ENCODE measurements at regions of chr11 and their contacts with region 1.

Region 1: DNA sequence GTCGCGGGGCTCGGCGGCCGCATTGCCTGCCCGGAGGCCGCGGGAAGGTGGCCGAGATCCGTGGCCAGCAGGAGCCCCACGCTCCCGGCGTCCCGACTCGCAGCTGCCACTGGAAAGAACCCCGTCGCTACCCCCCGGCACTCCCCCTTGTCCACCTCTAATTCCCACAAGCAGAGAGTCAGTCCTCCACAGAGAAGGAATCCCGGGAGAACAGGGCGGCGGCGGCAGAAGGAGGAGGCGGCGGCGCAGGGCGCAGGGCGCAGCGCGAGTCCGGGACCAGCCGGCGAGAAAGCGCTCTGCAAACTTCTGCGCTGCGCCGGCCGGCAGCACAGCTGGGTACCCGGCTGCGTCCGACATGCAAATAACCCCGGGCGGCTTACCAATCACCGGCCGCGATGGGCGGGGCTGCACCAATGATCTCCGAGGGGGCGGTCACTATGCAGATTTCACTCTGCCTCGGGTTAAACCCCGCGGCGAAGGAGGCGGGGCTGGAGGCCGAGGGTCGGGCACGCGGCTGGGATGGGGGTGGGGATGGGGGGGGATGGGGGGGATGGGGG is at the start of gene ABTB2:
- DNase-seq: peak; percentile 92 to 98 (median 96)
- ATAC-seq: peak; percentile 89
- H3K4me3 ChIP-seq: peak within 1 kb of the TSS; percentile 75
- H3K4me3 Mint-ChIP-seq: peak within 1 kb of the TSS; percentile 91
- H3K27ac ChIP-seq: peak within 1 kb of the TSS; percentile 28 to 36
- H3K27ac Mint-ChIP-seq: peak within 1 kb of the TSS; percentile 42
- H3K4me1 ChIP-seq: peaks cover 31% of the 10 kb centered on the region
- H3K4me1 Mint-ChIP-seq: peaks cover 14% of the 10 kb centered on the region
- H3K27me3 ChIP-seq: peaks cover 18 to 38% of the 10 kb centered on the region in 2 experiments
- H3K27me3 Mint-ChIP-seq: peaks cover 53% of the 10 kb centered on the region
- CTCF ChIP-seq: no peak
- total RNA-seq, gene ABTB2: 0.88 to 1.0 TPM

Region 2: GRCh38 chr11:32583459-32584271 is 1774.1 kb before region 1 on chr11 and contains the start of gene EIF3M:
- CTCF ChIA-PET with region 1: no interaction called
- POLR2A ChIA-PET with region 1: no interaction called
- intact Hi-C with region 1: loop called in 1 of 2 experiments (anchors 5 kb)
- DNase-seq: peak; percentile 92 to 98 (median 95)
- ATAC-seq: peak; percentile 98
- H3K4me3 ChIP-seq: peak within 1 kb of the TSS; percentile 89
- H3K4me3 Mint-ChIP-seq: peak within 1 kb of the TSS; percentile 94
- H3K27ac ChIP-seq: peak within 1 kb of the TSS; percentile 84 to 87
- H3K27ac Mint-ChIP-seq: peak within 1 kb of the TSS; percentile 94
- H3K4me1 ChIP-seq: peaks cover 38% of the 10 kb centered on the region
- H3K4me1 Mint-ChIP-seq: peaks cover 52% of the 10 kb centered on the region
- H3K27me3 ChIP-seq: no peaks in the 10 kb centered on the region
- H3K27me3 Mint-ChIP-seq: no peaks in the 10 kb centered on the region
- CTCF ChIP-seq: no peak
- total RNA-seq, gene EIF3M: 260 to 264 TPM

Region 3: GRCh38 chr11:33692013-33692504 is 665.7 kb before region 1 on chr11:
- CTCF ChIA-PET with region 1: no interaction called
- POLR2A ChIA-PET with region 1: interaction called, 3 read pairs
- intact Hi-C with region 1: loop called in 1 of 2 experiments (anchors 10 kb)
- DNase-seq: no peak
- ATAC-seq: no peak
- H3K4me3 ChIP-seq: no peak overlapping the region
- H3K4me3 Mint-ChIP-seq: no peak overlapping the region
- H3K27ac ChIP-seq: no peak overlapping the region
- H3K27ac Mint-ChIP-seq: no peak overlapping the region
- H3K4me1 ChIP-seq: no peaks in the 10 kb centered on the region
- H3K4me1 Mint-ChIP-seq: peaks cover 10% of the 10 kb centered on the region
- H3K27me3 ChIP-seq: peaks cover 2 to 3% of the 10 kb centered on the region in 2 experiments
- H3K27me3 Mint-ChIP-seq: peaks cover 10% of the 10 kb centered on the region
- CTCF ChIP-seq: no peak

Region 4: DNA sequence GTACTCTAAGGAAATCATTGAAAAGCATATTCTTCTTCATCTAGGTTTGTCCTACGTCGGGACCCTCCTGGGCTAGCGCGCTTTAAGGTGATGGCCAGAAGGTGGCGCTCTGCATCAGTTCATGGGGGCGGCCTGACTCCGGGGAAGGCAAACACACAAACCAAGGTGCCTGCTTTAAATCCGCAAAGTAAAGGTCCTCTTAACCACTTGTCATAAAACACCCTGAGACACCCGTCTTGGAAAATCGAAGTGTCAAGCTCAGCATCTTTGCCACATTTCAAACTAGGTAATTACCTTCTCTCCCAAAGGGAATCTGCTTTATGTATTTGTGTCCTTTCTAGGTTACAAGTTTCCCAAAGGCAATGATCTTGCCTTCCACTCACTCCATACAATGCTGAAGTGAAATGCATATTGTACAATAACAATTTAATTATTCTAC is 499.8 kb before region 1 on chr11:
- CTCF ChIA-PET with region 1: no interaction called
- POLR2A ChIA-PET with region 1: no interaction called
- intact Hi-C with region 1: loop called (anchors 1 kb)
- DNase-seq: peak; percentile 54 to 84 (median 64)
- ATAC-seq: peak; percentile 89
- H3K4me3 ChIP-seq: no peak overlapping the region
- H3K4me3 Mint-ChIP-seq: no peak overlapping the region
- H3K27ac ChIP-seq: no peak overlapping the region
- H3K27ac Mint-ChIP-seq: no peak overlapping the region
- H3K4me1 ChIP-seq: no peaks in the 10 kb centered on the region
- H3K4me1 Mint-ChIP-seq: no peaks in the 10 kb centered on the region
- H3K27me3 ChIP-seq: peaks cover 21 to 30% of the 10 kb centered on the region in 2 experiments
- H3K27me3 Mint-ChIP-seq: peaks cover 56% of the 10 kb centered on the region
- CTCF ChIP-seq: peak; percentile 74

Region 5: GRCh38 chr11:34051349-34052035 is 306.3 kb before region 1 on chr11 and contains the start of gene CAPRIN1:
- CTCF ChIA-PET with region 1: interaction called, 3 read pairs
- POLR2A ChIA-PET with region 1: interaction called, 10 read pairs
- intact Hi-C with region 1: loop called (anchors 2 kb)
- DNase-seq: peak; percentile 70 to 93 (median 80)
- ATAC-seq: peak; percentile 69
- H3K4me3 ChIP-seq: peak within 1 kb of the TSS; percentile 99
- H3K4me3 Mint-ChIP-seq: peak within 1 kb of the TSS; percentile 95
- H3K27ac ChIP-seq: peak within 1 kb of the TSS; percentile 98 to 99
- H3K27ac Mint-ChIP-seq: peak within 1 kb of the TSS; percentile 100
- H3K4me1 ChIP-seq: peaks cover 25% of the 10 kb centered on the region
- H3K4me1 Mint-ChIP-seq: peaks cover 26% of the 10 kb centered on the region
- H3K27me3 ChIP-seq: no peaks in the 10 kb centered on the region
- H3K27me3 Mint-ChIP-seq: no peaks in the 10 kb centered on the region
- CTCF ChIP-seq: no peak
- total RNA-seq, gene CAPRIN1: 107 TPM

Region 6: GRCh38 chr11:34174412-34175041 is 183.3 kb before region 1 on chr11:
- CTCF ChIA-PET with region 1: interaction called, 47 read pairs
- POLR2A ChIA-PET with region 1: interaction called, 23 read pairs
- intact Hi-C with region 1: loop called (anchors 1 kb)
- DNase-seq: peak; percentile 65 to 88 (median 74)
- ATAC-seq: peak; percentile 99
- H3K4me3 ChIP-seq: peak overlapping the region; percentile 28
- H3K4me3 Mint-ChIP-seq: no peak overlapping the region
- H3K27ac ChIP-seq: no peak overlapping the region
- H3K27ac Mint-ChIP-seq: no peak overlapping the region
- H3K4me1 ChIP-seq: peaks cover 12% of the 10 kb centered on the region
- H3K4me1 Mint-ChIP-seq: no peaks in the 10 kb centered on the region
- H3K27me3 ChIP-seq: peaks cover 0 to 2% of the 10 kb centered on the region in 2 experiments
- H3K27me3 Mint-ChIP-seq: no peaks in the 10 kb centered on the region
- CTCF ChIP-seq: peak; percentile 79

Region 7: DNA sequence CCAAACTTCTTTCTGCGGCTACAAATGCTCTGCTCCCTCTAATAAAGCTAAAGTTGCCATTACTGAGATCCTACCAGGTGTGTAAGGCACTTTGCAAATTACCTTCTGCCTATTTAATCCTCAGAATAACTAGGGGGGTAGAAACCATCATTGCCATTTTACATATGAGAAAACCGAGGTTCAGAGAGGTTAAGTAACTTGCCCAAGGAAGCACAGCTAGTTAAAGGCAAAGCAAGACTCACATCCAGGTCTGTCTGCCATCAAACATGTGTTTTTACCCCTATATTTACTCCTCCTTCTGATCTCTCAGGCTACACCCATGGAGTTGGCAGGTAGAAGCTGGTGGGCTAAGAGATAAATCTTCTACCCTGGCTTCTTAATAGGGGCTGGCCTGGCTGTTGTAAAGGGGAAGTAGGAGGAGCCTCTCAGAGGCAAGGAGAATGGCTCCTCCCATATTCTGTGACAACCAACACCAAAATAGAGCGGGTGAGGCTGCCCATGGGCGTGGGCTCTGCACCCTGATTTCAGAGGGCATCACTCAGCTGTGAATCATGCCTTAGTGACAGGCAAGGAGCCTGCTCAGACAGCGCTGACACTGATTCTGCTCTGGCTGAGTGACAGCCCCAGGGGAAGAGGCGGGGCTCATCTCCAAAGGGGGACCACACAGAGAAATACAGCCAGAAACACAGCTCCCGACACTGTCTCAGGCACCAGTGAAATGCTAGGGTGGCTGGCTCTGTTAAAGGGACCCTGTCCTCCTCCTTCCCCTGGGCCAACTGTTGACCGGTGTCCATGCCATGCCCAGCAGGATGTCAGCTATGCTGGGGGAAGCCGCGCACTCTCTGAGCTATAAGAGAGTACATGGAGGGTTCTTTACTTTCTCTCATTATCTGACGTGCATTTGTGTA is 106.8 kb before region 1 on chr11:
- CTCF ChIA-PET with region 1: interaction called, 3 read pairs
- POLR2A ChIA-PET with region 1: interaction called, 9 read pairs
- intact Hi-C with region 1: loop called (anchors 1 to 5 kb)
- DNase-seq: peak; percentile 30 to 87 (median 67)
- ATAC-seq: peak; percentile 94
- H3K4me3 ChIP-seq: peak overlapping the region; percentile 26
- H3K4me3 Mint-ChIP-seq: peak overlapping the region; percentile 14
- H3K27ac ChIP-seq: no peak overlapping the region
- H3K27ac Mint-ChIP-seq: peak overlapping the region; percentile 60
- H3K4me1 ChIP-seq: peaks cover 48% of the 10 kb centered on the region
- H3K4me1 Mint-ChIP-seq: peaks cover 63% of the 10 kb centered on the region
- H3K27me3 ChIP-seq: no peaks in the 10 kb centered on the region
- H3K27me3 Mint-ChIP-seq: no peaks in the 10 kb centered on the region
- CTCF ChIP-seq: no peak

Region 8: DNA sequence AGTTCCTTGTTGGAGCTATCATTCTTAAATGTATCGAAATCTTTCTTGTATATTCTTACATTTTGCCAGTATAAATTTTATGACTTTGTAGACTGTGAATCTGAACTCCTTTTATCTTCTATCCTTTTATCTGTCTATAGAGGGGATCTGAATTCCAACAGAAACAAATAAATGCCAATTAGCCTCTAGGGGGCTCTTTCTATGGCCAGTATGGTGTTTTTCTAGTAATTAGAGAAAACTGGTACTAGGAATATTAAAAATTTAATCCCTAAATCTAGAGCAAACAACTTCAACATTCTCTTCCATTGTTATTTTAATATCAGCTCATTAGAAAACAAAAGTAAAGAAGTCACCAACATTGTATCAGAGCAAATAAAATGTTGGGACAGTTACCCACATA is 59.4 kb after region 1 on chr11:
- CTCF ChIA-PET with region 1: no interaction called
- POLR2A ChIA-PET with region 1: no interaction called
- intact Hi-C with region 1: no loop called
- DNase-seq: no peak
- ATAC-seq: no peak
- H3K4me3 ChIP-seq: no peak overlapping the region
- H3K4me3 Mint-ChIP-seq: no peak overlapping the region
- H3K27ac ChIP-seq: no peak overlapping the region
- H3K27ac Mint-ChIP-seq: no peak overlapping the region
- H3K4me1 ChIP-seq: no peaks in the 10 kb centered on the region
- H3K4me1 Mint-ChIP-seq: peaks cover 2% of the 10 kb centered on the region
- H3K27me3 ChIP-seq: peaks cover 2 to 17% of the 10 kb centered on the region in 2 experiments
- H3K27me3 Mint-ChIP-seq: peaks cover 38% of the 10 kb centered on the region
- CTCF ChIP-seq: no peak

Measured in CD4-positive, alpha-beta T cell (primary cell).